A549 (cell line): ENCODE measurements at regions of chr20 and their contacts with region 1.

Region 1: DNA sequence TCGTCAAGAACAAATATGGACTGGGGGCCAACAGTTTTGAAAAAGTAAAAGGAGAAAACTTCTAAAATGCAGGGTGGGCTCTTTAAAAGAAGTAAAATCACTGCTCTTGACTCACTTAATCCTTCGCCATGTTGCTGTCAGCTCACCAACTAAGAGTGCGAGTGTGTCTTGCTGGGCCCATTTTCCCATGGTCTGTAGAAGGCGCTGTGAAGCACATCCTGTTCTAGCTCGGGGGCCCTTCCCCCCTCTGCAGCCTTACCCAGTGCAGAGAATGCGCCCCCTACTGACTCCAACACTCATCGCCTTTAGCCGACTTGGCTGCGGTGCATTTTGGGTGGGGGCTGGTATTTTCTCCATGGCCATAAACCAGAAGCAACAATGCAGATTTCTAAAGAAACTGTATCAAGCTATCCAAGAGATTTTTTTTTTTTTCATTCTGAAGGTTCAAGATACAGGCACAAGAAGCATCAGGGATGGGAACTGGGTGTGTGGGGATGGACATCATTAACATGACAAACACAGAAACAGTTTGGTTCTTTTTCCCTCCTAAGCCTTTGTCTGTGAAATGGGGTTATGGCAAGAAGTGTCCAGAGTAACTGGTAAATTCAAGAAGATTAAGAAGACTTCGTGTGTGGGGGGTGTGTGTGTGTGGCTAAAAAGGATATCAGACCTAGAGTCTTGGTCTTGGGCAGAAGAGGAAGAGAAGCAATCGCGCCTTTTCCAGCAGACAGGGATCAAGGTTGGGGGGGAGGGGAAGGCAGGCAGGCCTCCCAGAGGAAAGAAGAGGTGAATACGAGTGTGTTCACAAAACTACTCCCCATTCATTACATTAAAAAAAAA is 1.7 kb downstream of the ADNP start:
- DNase-seq: peak; percentile 83 to 98
- ATAC-seq: peak; percentile 64 to 87
- H3K4me3 ChIP-seq: peak overlapping the region; percentile 83
- H3K27ac ChIP-seq: peak overlapping the region; percentile 98 to 99
- H3K4me1 ChIP-seq: peaks cover 40% of the 10 kb centered on the region
- CTCF ChIP-seq: peak; percentile 99
- EP300 ChIP-seq: no peak
- POLR2A ChIP-seq: no peak
- RAD21 ChIP-seq: peak; percentile 71 to 73

Region 2: GRCh38 chr20:50744143-50744792 is 185.3 kb before region 1 on chr20:
- CTCF ChIA-PET with region 1: no interaction called
- POLR2A ChIA-PET with region 1: no interaction called
- DNase-seq: peak; percentile 84 to 92
- ATAC-seq: peak; percentile 86 to 97
- H3K4me3 ChIP-seq: peak overlapping the region; percentile 23; the same call in 2 of the 3 replicates
- H3K27ac ChIP-seq: peak overlapping the region; percentile 86 to 94
- H3K4me1 ChIP-seq: peaks cover 90% of the 10 kb centered on the region
- CTCF ChIP-seq: peak; percentile 57
- EP300 ChIP-seq: peak in 1 of 2 experiments; percentile 24; a peak in 1 of 5 replicates
- POLR2A ChIP-seq: no peak
- RAD21 ChIP-seq: peak; percentile 81 to 84

Region 3: DNA sequence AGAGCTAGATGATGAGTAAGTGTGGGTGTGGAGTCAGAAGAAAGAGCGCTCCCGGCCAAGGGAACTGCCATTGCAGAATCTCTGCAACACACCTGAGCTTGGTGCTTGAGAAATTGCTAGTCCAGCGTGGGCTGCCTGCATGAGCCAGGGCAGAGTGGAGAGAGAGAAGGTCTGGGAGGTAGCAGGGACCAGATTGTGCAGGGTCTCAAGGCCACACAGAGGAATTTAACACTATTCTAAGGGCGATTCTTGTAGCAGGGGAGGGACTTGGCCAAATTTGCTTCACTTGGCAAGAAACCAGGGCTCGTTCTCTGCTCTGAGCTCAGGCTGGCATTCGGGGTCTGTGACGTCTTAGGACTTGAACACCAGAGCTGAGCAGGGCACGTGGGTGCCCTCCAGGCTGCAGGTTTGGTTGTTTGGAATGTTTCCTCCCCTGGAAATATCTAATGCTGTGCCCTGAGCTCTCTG is 81.1 kb before region 1 on chr20:
- CTCF ChIA-PET with region 1: interaction called, 10 read pairs
- POLR2A ChIA-PET with region 1: no interaction called
- DNase-seq: no peak
- ATAC-seq: no peak
- H3K4me3 ChIP-seq: no peak overlapping the region
- H3K27ac ChIP-seq: no peak overlapping the region
- H3K4me1 ChIP-seq: peaks cover 15% of the 10 kb centered on the region; the same call in 2 of the 3 replicates
- CTCF ChIP-seq: no peak
- EP300 ChIP-seq: no peak
- POLR2A ChIP-seq: no peak
- RAD21 ChIP-seq: no peak

Region 4: GRCh38 chr20:50898475-50898874 is 31.0 kb before region 1 on chr20:
- CTCF ChIA-PET with region 1: interaction called, 14 read pairs
- POLR2A ChIA-PET with region 1: interaction called, 3 read pairs
- DNase-seq: no peak
- ATAC-seq: no peak
- H3K4me3 ChIP-seq: no peak overlapping the region
- H3K27ac ChIP-seq: peak overlapping the region in 1 of 2 experiments; percentile 6; a peak in 1 of 6 replicates
- H3K4me1 ChIP-seq: peaks cover 10% of the 10 kb centered on the region
- CTCF ChIP-seq: no peak
- EP300 ChIP-seq: no peak
- POLR2A ChIP-seq: no peak
- RAD21 ChIP-seq: no peak

Region 5: DNA sequence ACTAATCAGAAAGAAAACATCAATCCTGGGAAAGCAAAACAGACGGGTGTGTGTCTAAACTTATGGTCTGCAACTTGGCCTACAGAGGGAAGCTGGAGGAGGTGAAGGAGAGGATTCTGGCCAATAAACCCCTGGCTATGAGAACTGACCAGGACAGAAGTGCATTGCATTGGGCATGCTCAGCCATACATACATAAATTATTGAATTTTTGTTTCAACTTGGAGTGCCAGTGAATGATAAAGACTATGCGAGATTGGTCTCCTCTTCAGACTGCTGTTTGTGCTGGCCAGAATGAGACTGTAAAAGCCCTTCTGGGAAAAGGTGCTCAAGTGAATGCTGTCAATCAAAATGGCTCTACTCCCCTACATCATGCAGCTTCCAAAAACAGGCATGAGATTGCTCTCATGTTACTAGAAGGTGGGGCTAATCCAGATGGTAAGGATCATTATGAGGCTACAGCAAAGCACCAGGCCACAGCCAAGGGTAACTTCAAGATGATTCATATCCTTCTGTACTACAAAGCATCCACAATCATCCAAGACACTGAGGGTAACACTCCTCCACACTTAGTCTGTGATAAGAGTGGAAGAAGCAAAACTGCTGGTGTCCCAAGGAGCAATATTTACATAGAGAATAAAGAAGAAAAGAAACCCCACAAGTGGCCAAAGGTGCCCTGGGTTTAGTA is 15.7 kb before region 1 on chr20:
- CTCF ChIA-PET with region 1: interaction called, 167 read pairs
- POLR2A ChIA-PET with region 1: interaction called, 4 read pairs
- DNase-seq: no peak
- ATAC-seq: peak; percentile 50 to 73; a peak in 5 of 6 replicates
- H3K4me3 ChIP-seq: no peak overlapping the region
- H3K27ac ChIP-seq: no peak overlapping the region
- H3K4me1 ChIP-seq: peaks cover 33% of the 10 kb centered on the region
- CTCF ChIP-seq: no peak
- EP300 ChIP-seq: no peak
- POLR2A ChIP-seq: no peak
- RAD21 ChIP-seq: no peak

Region 6: GRCh38 chr20:50948132-50948785 is 18.7 kb after region 1 on chr20:
- CTCF ChIA-PET with region 1: interaction called, 15 read pairs
- POLR2A ChIA-PET with region 1: interaction called, 3 read pairs
- DNase-seq: no peak
- ATAC-seq: no peak
- H3K4me3 ChIP-seq: no peak overlapping the region
- H3K27ac ChIP-seq: no peak overlapping the region
- H3K4me1 ChIP-seq: no peaks in the 10 kb centered on the region
- CTCF ChIP-seq: no peak
- EP300 ChIP-seq: no peak
- POLR2A ChIP-seq: no peak
- RAD21 ChIP-seq: no peak

Region 7: DNA sequence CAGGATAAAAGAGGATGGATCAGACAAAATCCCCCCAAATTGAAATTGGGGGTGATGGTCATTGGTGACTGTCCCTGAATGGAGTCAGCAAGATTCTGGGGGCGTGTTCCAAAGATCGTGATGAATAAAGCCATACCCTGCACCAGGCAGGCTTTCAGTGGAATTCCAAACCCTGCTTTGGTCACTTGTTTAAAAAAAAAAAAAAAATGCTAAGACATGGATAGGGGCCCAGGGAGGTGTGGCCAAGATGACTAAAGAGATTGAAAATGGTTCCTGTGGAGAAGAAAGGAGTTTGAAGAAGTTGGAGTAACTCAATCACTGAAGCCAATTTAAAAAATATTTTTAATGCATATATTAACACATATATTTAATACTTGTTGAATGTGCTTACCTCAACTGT is 254.8 kb after region 1 on chr20:
- CTCF ChIA-PET with region 1: no interaction called
- POLR2A ChIA-PET with region 1: no interaction called
- DNase-seq: no peak
- ATAC-seq: no peak
- H3K4me3 ChIP-seq: no peak overlapping the region
- H3K27ac ChIP-seq: no peak overlapping the region
- H3K4me1 ChIP-seq: no peaks in the 10 kb centered on the region
- CTCF ChIP-seq: no peak
- EP300 ChIP-seq: no peak
- POLR2A ChIP-seq: no peak
- RAD21 ChIP-seq: no peak

Region 8: GRCh38 chr20:51195419-51195901 is 265.9 kb after region 1 on chr20:
- CTCF ChIA-PET with region 1: no interaction called
- POLR2A ChIA-PET with region 1: no interaction called
- DNase-seq: no peak
- ATAC-seq: no peak
- H3K4me3 ChIP-seq: no peak overlapping the region
- H3K27ac ChIP-seq: no peak overlapping the region
- H3K4me1 ChIP-seq: no peaks in the 10 kb centered on the region
- CTCF ChIP-seq: no peak
- EP300 ChIP-seq: no peak
- POLR2A ChIP-seq: no peak
- RAD21 ChIP-seq: no peak